HepG2 (cell line): ENCODE measurements at regions of chr15 and their contacts with region 1.

Region 1: DNA sequence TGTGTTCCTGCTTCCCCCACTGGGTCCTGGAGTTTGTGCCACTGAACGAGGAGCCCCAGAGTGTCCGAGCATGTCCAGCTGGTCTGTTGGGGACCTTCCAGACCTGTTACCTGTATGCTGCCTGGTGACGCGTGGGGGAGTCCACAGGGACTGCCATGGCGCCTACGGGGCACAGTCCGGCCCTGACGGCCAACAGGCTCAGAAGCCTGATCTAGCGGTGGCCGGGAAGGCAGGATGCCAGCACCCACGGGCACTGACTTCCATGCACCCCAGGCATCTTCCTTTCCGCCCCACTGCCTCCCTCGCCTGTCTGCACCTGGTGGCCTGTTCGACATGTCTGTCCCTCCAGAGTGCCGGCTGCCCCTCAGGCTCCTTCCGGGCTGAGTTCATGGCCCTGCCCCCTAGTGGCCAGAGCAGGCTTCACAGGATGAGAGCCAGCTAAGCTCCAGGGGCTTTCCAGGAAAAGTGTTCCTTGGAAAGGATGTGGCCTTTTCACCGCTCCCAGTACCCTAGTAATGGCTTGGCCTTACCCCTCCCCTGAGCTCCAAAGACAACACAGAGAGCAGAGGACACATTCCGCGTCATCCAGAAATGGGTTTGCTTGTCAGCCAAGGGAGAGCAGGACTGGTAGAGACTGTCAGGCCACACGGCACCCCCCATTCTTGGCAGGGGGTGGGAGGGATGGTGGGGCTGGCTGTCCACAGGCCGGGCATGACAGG is 35.7 kb downstream of the NGRN start:
- DNase-seq: peak; percentile 58
- ATAC-seq: peak; percentile 97
- H3K4me3 ChIP-seq: peak overlapping the region in 1 of 3 experiments; percentile 24; a peak in 1 of 6 replicates
- H3K27ac ChIP-seq: no peak overlapping the region
- H3K4me1 ChIP-seq: peaks cover 23% of the 10 kb centered on the region
- H3K27me3 ChIP-seq: no peaks in the 10 kb centered on the region
- CTCF ChIP-seq: peak; percentile 85
- EP300 ChIP-seq: no peak
- POLR2A ChIP-seq: no peak
- RAD21 ChIP-seq: peak; percentile 50; the same call in 1 of the 2 replicates

Region 2: DNA sequence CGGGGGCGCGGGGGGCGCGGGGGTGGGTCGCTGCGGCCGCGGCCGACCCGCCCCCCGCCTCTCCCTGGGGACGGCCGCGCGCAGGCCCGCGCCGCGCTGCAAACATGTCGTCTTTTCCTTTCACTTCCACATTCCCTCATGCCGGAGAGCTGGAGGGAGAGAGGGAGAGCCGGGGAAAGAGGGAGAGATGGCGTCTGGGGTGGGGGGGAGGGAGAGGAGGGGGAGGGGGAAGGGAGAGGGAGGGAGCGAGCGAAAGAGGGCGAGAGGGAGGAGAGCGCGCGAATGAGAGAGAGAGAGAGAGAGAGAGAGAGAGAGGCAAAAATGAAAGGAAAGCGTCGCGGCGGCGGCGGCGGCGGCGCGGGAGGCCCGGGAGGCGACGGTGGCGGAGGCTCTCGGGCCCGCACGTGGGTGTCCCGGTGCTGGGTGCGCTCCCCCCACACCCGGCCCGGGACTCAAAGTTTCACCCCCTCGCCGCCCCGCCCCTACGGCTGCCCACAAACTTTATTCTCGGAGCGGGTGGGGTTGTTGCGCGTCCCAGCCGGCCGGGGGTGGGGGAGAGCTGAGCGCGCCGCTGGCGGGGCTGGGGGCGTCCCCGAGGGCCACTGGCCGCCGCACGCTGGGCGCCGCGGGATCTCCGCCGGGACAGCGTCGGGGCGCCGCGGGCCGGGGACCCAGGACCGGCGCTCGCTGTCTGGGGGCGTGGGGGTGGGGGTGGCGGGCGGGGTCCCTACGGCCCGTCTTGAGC is 299.3 kb before region 1 on chr15:
- CTCF ChIA-PET with region 1: no interaction called
- POLR2A ChIA-PET with region 1: no interaction called
- in situ Hi-C with region 1: no loop called
- intact Hi-C with region 1: no loop called
- DNase-seq: peak; percentile 29
- ATAC-seq: peak; percentile 14
- H3K4me3 ChIP-seq: peak overlapping the region; percentile 71 to 86 (median 78); a peak in 5 of 6 replicates
- H3K27ac ChIP-seq: peak overlapping the region; percentile 97
- H3K4me1 ChIP-seq: peaks cover 78% of the 10 kb centered on the region
- H3K27me3 ChIP-seq: no peaks in the 10 kb centered on the region; a peak in 1 of 5 replicates
- CTCF ChIP-seq: no peak
- EP300 ChIP-seq: no peak
- POLR2A ChIP-seq: no peak; a peak in 1 of 4 replicates
- RAD21 ChIP-seq: peak; percentile 8; the same call in 1 of the 2 replicates

Region 3: DNA sequence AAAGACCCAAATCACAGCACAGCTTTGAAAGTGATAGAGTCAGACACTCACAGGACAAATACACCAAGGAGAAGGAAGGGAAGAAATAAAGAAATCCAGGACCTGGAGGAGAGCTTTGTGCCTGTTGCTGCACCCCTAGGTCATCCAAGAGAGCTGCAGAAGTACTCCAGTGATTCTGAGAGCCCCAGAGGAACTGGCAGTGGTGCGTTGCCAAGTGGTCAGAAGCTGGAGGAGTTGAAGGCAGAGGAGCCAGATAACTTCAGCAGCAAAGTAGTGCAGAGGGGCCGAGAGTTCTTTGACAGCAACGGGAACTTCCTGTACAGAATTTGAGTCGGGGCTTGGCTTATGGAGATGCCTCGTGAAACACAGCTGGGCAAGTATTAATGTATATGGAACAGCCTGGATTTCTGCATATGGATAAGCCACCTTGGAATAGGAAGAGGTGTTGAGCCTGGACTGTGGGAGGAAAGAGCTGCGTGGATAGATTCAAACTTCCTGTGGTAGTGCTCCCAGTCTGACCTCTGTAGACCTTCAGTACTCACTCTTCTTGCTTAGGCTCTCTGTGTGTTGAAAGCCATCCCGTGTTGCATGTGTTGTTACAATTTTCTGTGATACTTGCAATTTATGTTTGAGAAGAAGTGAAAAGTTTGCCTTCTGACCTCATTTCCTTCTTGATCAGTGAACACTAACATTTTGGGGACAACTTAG is 29.5 kb before region 1 on chr15:
- CTCF ChIA-PET with region 1: no interaction called
- POLR2A ChIA-PET with region 1: no interaction called
- in situ Hi-C with region 1: no loop called
- intact Hi-C with region 1: no loop called
- DNase-seq: no peak
- ATAC-seq: no peak
- H3K4me3 ChIP-seq: no peak overlapping the region
- H3K27ac ChIP-seq: no peak overlapping the region
- H3K4me1 ChIP-seq: peaks cover 24% of the 10 kb centered on the region
- H3K27me3 ChIP-seq: no peaks in the 10 kb centered on the region
- CTCF ChIP-seq: no peak
- EP300 ChIP-seq: no peak
- POLR2A ChIP-seq: no peak
- RAD21 ChIP-seq: no peak

Region 4: DNA sequence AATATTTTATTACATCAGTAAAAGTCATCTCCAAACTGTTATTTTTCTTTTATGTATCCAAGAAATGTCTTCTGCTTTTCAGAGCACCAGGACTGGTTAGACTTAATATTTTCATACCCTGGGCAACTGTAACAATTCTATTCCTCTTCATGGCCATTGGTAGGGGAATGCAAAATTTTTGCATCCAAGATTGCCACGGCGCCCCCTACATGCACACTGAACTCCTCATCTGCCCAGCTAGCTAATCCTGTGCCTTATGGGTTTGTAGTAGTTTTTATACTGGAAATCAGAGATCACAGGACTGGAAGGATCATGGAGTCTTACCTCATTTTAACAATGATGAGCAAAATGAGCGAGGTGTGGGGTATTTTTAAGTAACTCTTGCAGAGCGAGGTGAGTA is 302.7 kb after region 1 on chr15:
- CTCF ChIA-PET with region 1: no interaction called
- POLR2A ChIA-PET with region 1: no interaction called
- in situ Hi-C with region 1: loop called (anchors 10 kb)
- intact Hi-C with region 1: no loop called
- DNase-seq: no peak
- ATAC-seq: peak; percentile 51; the same call in 2 of the 3 replicates
- H3K4me3 ChIP-seq: no peak overlapping the region
- H3K27ac ChIP-seq: no peak overlapping the region
- H3K4me1 ChIP-seq: no peaks in the 10 kb centered on the region
- H3K27me3 ChIP-seq: no peaks in the 10 kb centered on the region
- CTCF ChIP-seq: peak; percentile 50
- EP300 ChIP-seq: no peak
- POLR2A ChIP-seq: no peak
- RAD21 ChIP-seq: no peak